Activated T-helper 1 cell treated with anti-CD3 and anti-CD28 coated beads, Interleukin-12 subunit alpha, Interleukin-12 subunit beta, Interleukin-2, Interleukin-4 antibody, amounts not matched to agents 30 ng/mL and 10 ng/mL and 1 ng/mL, durations not matched to agents 14 hours and 24 hours and 36 hours (primary cell): ENCODE measurements at regions of chr19 and their contacts with region 1.

Region 1: DNA sequence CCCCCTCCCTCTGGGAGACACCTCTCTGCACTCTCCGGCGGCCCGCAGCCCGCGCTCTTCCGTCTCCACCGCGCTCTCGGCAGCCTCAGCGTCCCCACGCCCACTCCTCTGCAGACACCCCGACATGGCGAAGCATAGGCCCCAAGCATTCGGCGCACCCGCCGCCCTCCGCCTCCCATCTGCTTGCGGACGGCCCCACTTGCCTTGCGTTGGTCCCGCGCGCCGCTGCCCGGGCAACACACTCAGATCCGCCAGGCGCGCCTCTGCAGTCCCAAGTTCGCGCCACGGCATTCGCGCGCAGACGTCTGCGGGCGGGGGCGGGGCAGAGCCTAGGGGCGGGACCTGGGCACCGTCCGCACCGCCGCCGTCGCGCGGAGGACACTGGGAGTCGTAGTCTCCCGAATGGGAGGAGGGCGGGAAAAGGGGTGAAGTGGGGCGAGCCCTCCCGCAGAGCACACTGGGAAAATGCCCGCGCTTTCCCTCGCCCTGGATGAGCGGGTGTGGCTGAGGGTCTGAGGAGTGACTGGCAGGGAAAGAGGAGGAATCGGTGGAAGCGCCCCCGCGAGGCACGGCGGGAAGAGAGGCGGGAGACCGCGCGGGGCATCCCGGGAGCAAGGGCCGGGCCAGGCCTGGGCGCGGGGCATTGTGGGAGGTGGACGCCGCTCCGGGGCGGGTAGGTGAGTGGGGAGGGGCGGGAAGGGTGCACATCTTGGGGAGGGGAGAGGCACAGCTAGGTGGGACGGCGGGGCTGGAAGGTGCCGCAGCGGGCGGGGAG is at the starts of genes LIG1 and ZSWIM9:
- DNase-seq: peak; percentile 89
- H3K4me3 Mint-ChIP-seq: peak within 1 kb of the TSS; percentile 97
- H3K27ac Mint-ChIP-seq: peak within 1 kb of the TSS; percentile 100
- H3K4me1 Mint-ChIP-seq: peaks cover 33% of the 10 kb centered on the region
- H3K27me3 Mint-ChIP-seq: peaks cover 3% of the 10 kb centered on the region
- total RNA-seq, gene LIG1: 133 and 140 TPM in 2 replicates
- total RNA-seq, gene ZSWIM9: 8.4 and 9.5 TPM in 2 replicates

Region 2: GRCh38 chr19:47824396-47824795 is 345.8 kb before region 1 on chr19:
- intact Hi-C with region 1: no loop called
- DNase-seq: no peak
- H3K4me3 Mint-ChIP-seq: no peak overlapping the region
- H3K27ac Mint-ChIP-seq: no peak overlapping the region
- H3K4me1 Mint-ChIP-seq: no peaks in the 10 kb centered on the region
- H3K27me3 Mint-ChIP-seq: peaks cover 10% of the 10 kb centered on the region

Region 3: GRCh38 chr19:48110350-48110966 is 59.8 kb before region 1 on chr19 and contains the start of gene PLA2G4C:
- intact Hi-C with region 1: loop called (anchors 1 kb)
- DNase-seq: peak; percentile 76
- H3K4me3 Mint-ChIP-seq: peak within 1 kb of the TSS; percentile 89
- H3K27ac Mint-ChIP-seq: peak within 1 kb of the TSS; percentile 93
- H3K4me1 Mint-ChIP-seq: peaks cover 15% of the 10 kb centered on the region
- H3K27me3 Mint-ChIP-seq: no peaks in the 10 kb centered on the region
- total RNA-seq, gene PLA2G4C: 12.2 and 12.7 TPM in 2 replicates

Region 4: DNA sequence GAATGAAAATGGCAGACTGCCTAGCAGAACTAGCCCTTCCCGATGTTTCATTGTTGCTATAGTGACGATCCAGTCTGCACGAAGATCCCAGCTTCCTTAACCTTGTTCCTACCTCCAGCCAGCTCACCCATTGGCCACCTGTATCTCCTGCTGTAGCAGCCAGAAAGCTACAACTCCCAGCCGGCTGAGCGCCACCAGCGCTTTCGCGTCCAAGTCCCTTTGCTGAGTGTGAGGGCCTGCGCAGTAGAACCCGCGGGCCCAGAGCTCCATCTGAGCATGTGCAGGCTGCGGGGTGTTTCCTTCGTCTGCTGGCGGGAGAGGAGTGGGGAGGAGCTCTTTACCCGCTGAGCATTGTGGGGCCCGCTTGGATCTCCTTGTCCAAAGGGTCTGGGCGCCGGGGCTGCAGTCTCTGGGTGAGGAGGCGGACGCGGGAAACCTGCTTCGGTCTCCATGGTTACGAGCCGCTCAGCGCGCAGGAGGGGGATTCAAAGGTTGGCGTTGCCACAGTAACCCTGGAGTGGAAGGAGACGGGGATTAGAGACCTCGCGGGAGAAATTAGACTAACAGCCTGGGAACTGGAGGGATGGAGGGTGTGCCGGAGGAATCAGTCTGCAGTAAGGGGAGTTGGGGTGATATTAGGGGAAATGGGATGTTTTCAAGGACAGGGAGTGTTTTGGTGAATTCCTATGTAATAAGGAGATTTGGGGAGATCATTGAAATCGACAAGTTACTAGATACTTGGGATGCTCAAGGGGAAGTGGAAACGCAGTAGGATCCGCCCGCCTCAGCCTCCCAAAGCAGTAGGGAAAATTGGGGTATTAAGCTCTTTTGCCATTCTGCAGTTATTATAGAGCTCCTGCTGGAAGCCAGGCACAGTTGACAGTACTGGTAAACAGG is 33.8 kb after region 1 on chr19:
- intact Hi-C with region 1: loop called (anchors 1 kb)
- DNase-seq: peak; percentile 92
- H3K4me3 Mint-ChIP-seq: no peak overlapping the region
- H3K27ac Mint-ChIP-seq: no peak overlapping the region
- H3K4me1 Mint-ChIP-seq: peaks cover 13% of the 10 kb centered on the region
- H3K27me3 Mint-ChIP-seq: no peaks in the 10 kb centered on the region

Region 5: DNA sequence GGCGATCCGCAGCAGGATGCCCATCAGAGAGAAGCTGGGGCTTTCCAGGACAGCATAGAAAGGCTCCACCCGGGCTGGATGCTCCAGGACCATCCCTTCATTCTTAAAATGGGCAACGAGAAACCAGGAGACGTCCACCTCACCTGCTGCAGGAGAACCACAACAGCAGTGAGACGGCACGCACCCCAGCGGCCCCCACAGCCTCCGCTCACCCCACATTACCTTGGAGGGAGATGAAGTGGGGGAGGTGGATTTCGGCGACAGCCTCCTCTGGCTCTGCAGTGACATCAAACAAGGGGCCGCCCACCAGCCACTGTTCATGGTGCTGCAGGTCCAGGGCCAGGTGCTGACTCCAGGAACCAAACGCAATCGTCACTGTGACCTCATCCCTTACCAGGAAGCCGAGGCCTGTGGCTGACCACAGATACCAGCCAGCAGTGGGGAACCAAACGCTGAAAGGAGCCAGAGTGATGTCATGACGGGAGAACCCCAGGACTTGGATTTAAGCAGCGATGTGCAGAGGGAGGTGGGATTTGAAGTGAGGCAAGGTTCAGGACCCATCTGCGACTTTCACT is 60.4 kb after region 1 on chr19:
- intact Hi-C with region 1: no loop called
- DNase-seq: peak; percentile 35
- H3K4me3 Mint-ChIP-seq: no peak overlapping the region
- H3K27ac Mint-ChIP-seq: peak overlapping the region; percentile 57
- H3K4me1 Mint-ChIP-seq: peaks cover 26% of the 10 kb centered on the region
- H3K27me3 Mint-ChIP-seq: no peaks in the 10 kb centered on the region

Region 6: GRCh38 chr19:48249502-48250014 is 79.3 kb after region 1 on chr19:
- intact Hi-C with region 1: loop called (anchors 2 kb)
- DNase-seq: peak; percentile 62
- H3K4me3 Mint-ChIP-seq: peak overlapping the region; percentile 94
- H3K27ac Mint-ChIP-seq: peak overlapping the region; percentile 99
- H3K4me1 Mint-ChIP-seq: peaks cover 85% of the 10 kb centered on the region
- H3K27me3 Mint-ChIP-seq: no peaks in the 10 kb centered on the region